CD8-positive, alpha-beta T cell (primary cell): ENCODE measurements at regions of chr14 and their contacts with region 1.

Region 1: GRCh38 chr14:95442633-95443021 is 73.8 kb downstream of the SYNE3 start:
- DNase-seq: peak; percentile 54 to 87 (median 77)
- ATAC-seq: peak; percentile 99
- H3K4me3 ChIP-seq: no peak overlapping the region
- H3K4me3 Mint-ChIP-seq: no peak overlapping the region
- H3K27ac ChIP-seq: no peak overlapping the region
- H3K27ac Mint-ChIP-seq: no peak overlapping the region
- H3K4me1 ChIP-seq: peaks cover 7% of the 10 kb centered on the region
- H3K4me1 Mint-ChIP-seq: peaks cover 4% of the 10 kb centered on the region
- H3K27me3 ChIP-seq: no peaks in the 10 kb centered on the region
- H3K27me3 Mint-ChIP-seq: no peaks in the 10 kb centered on the region
- CTCF ChIP-seq: peak; percentile 89

Region 2: GRCh38 chr14:95174184-95174792 is 268.3 kb before region 1 on chr14:
- CTCF ChIA-PET with region 1: no interaction called
- POLR2A ChIA-PET with region 1: no interaction called
- intact Hi-C with region 1: no loop called
- DNase-seq: no peak
- ATAC-seq: no peak
- H3K4me3 ChIP-seq: no peak overlapping the region
- H3K4me3 Mint-ChIP-seq: no peak overlapping the region
- H3K27ac ChIP-seq: no peak overlapping the region
- H3K27ac Mint-ChIP-seq: no peak overlapping the region
- H3K4me1 ChIP-seq: no peaks in the 10 kb centered on the region
- H3K4me1 Mint-ChIP-seq: peaks cover 2% of the 10 kb centered on the region
- H3K27me3 ChIP-seq: no peaks in the 10 kb centered on the region
- H3K27me3 Mint-ChIP-seq: peaks cover 2% of the 10 kb centered on the region
- CTCF ChIP-seq: no peak

Region 3: GRCh38 chr14:95460647-95461478 is 18.2 kb after region 1 on chr14:
- CTCF ChIA-PET with region 1: interaction called, 32 read pairs
- POLR2A ChIA-PET with region 1: interaction called, 6 read pairs
- intact Hi-C with region 1: loop called in 1 of 2 experiments (anchors 1 kb)
- DNase-seq: no peak
- ATAC-seq: no peak
- H3K4me3 ChIP-seq: no peak overlapping the region
- H3K4me3 Mint-ChIP-seq: no peak overlapping the region
- H3K27ac ChIP-seq: no peak overlapping the region
- H3K27ac Mint-ChIP-seq: peak overlapping the region; percentile 98
- H3K4me1 ChIP-seq: peaks cover 46% of the 10 kb centered on the region
- H3K4me1 Mint-ChIP-seq: peaks cover 48% of the 10 kb centered on the region
- H3K27me3 ChIP-seq: no peaks in the 10 kb centered on the region
- H3K27me3 Mint-ChIP-seq: no peaks in the 10 kb centered on the region
- CTCF ChIP-seq: no peak

Region 4: DNA sequence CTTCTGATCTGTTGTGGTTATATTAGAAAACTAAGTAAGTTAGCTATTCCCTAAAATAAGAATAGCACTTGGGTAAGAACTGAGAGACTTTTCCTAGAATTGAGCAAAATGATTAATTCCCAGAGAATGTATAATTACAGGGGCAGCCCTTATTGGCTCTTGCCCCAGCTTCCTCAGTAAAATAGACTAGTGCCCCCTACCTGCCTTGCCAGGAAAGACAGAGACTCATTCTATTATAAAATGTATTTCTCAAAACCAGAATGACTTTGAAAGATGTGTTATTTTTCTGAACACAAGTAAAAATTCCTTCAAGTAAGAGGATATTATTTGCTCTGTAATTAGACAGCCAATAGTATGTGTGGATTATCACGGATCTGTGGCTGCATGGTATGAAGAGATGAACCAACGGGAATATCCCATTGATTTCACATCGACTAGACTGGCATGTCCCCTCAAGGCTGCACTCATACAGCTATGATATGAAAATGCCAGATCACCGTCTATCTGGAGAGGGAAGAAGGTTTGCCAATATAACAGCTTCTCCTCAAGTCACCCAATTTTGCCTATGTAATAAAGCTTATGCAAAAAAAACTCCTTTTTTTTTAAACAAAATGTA is 84.9 kb after region 1 on chr14:
- CTCF ChIA-PET with region 1: interaction called, 532 read pairs
- POLR2A ChIA-PET with region 1: interaction called, 7 read pairs
- intact Hi-C with region 1: loop called (anchors 1 kb)
- DNase-seq: peak in 6 of 9 experiments; percentile 42 to 74 (median 60)
- ATAC-seq: peak; percentile 29
- H3K4me3 ChIP-seq: no peak overlapping the region
- H3K4me3 Mint-ChIP-seq: no peak overlapping the region
- H3K27ac ChIP-seq: no peak overlapping the region
- H3K27ac Mint-ChIP-seq: peak overlapping the region; percentile 61
- H3K4me1 ChIP-seq: peaks cover 52% of the 10 kb centered on the region
- H3K4me1 Mint-ChIP-seq: peaks cover 74% of the 10 kb centered on the region
- H3K27me3 ChIP-seq: no peaks in the 10 kb centered on the region
- H3K27me3 Mint-ChIP-seq: no peaks in the 10 kb centered on the region
- CTCF ChIP-seq: peak; percentile 86

Region 5: GRCh38 chr14:95547631-95548327 is 105.2 kb after region 1 on chr14:
- CTCF ChIA-PET with region 1: interaction called, 13 read pairs
- POLR2A ChIA-PET with region 1: no interaction called
- intact Hi-C with region 1: no loop called
- DNase-seq: no peak
- ATAC-seq: no peak
- H3K4me3 ChIP-seq: no peak overlapping the region
- H3K4me3 Mint-ChIP-seq: no peak overlapping the region
- H3K27ac ChIP-seq: no peak overlapping the region
- H3K27ac Mint-ChIP-seq: no peak overlapping the region
- H3K4me1 ChIP-seq: no peaks in the 10 kb centered on the region
- H3K4me1 Mint-ChIP-seq: no peaks in the 10 kb centered on the region
- H3K27me3 ChIP-seq: no peaks in the 10 kb centered on the region
- H3K27me3 Mint-ChIP-seq: no peaks in the 10 kb centered on the region
- CTCF ChIP-seq: no peak

Region 6: DNA sequence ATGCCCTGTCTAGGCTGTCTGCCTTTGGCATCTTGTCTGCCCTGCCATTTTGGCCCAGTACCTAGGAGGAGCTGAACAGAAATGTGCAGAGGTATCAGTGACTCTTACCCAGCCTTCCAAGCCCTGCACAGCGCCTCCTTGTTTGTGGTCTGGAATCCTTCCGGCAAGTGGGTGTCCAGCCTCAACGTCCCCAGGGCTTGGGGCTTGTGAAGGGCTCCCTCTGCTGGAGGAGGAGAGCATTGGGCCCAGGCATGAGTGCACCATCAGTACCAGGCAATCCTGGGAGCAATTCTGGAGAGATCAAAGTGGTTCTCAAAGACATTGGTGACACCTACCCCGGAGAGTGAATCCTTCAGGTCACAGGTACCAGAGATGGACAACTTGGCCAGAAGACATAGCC is 241.2 kb after region 1 on chr14:
- CTCF ChIA-PET with region 1: interaction called, 4 read pairs
- POLR2A ChIA-PET with region 1: no interaction called
- intact Hi-C with region 1: loop called in 1 of 2 experiments (anchors 5 kb)
- DNase-seq: peak in 4 of 9 experiments; percentile 15 to 50 (median 28)
- ATAC-seq: no peak
- H3K4me3 ChIP-seq: no peak overlapping the region
- H3K4me3 Mint-ChIP-seq: no peak overlapping the region
- H3K27ac ChIP-seq: no peak overlapping the region
- H3K27ac Mint-ChIP-seq: no peak overlapping the region
- H3K4me1 ChIP-seq: no peaks in the 10 kb centered on the region
- H3K4me1 Mint-ChIP-seq: no peaks in the 10 kb centered on the region
- H3K27me3 ChIP-seq: no peaks in the 10 kb centered on the region
- H3K27me3 Mint-ChIP-seq: peaks cover 16% of the 10 kb centered on the region
- CTCF ChIP-seq: peak; percentile 21